ENCODE measurements at regions of chr5 and their contacts with region 1.

Region 1: GRCh38 chr5:90474235-90475109 is at the starts of genes MBLAC2 and POLR3G:
- ATAC-seq: peak; percentile 78 to 87 (median 85)
- H3K4me3 ChIP-seq: peak within 1 kb of the TSS; percentile 55 to 87 (median 64)
- H3K27ac ChIP-seq: peak within 1 kb of the TSS; percentile 67 to 81
- H3K4me1 ChIP-seq: peaks cover 7 to 21% of the 10 kb centered on the region in 2 donors
- total RNA-seq, gene MBLAC2: 6.6 to 14.5 (median 10.3) TPM
- total RNA-seq, gene POLR3G: 2.0 to 19.8 (median 3.2) TPM

Region 2: DNA sequence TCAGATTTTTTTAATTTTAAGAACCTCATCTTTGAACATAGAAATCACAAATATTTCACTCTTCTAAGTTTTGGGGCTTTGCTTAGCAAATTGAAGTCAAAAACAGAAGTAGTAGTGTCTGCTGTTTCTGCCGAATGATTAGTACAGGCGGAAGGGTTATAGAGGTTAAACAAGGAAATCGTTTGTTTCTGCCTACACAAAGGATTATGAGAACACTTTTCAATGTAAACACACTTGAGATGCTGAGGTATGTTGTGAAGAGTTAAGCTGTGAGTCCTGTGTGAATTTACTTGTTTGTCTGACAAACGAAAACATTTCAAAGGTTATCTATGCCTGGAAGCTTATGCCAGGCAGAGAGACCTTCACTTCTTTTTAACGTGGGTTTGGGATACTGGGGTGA is 289.7 kb before region 1 on chr5:
- in situ Hi-C with region 1: no loop called
- ATAC-seq: no peak
- H3K4me3 ChIP-seq: no peak overlapping the region
- H3K27ac ChIP-seq: no peak overlapping the region
- H3K4me1 ChIP-seq: no peaks in the 10 kb centered on the region

Region 3: DNA sequence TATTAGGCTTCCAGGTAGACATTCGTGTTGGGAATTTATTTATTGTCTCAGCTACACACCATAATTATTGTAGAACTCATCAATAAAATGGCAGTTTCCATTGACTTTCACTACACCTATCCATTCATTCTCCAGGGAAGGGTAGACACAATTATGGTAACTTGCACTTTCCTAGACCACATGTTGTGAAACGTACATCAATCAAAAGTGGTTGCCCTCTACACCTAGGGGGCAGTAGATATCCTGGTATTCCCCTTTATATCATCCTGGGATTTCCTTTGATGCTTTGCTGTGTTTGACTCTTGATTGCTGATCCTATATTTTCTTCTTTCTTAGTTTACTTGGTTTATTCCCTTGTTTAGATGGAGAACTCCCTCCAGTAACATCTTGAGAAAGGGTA is 132.1 kb after region 1 on chr5:
- in situ Hi-C with region 1: loop called in 1 of 9 experiments (anchors 25 kb)
- ATAC-seq: peak in 3 of 8 experiments; percentile 33 to 59 (median 47)
- H3K4me3 ChIP-seq: no peak overlapping the region
- H3K27ac ChIP-seq: no peak overlapping the region
- H3K4me1 ChIP-seq: peaks cover 0 to 4% of the 10 kb centered on the region in 2 donors

Measured in motor neuron (in vitro differentiated cells).